AG04449 (cell line): ENCODE measurements at regions of chr5 and their contacts with region 1.

Region 1: GRCh38 chr5:42908509-42909488 is 97.1 kb upstream of the SELENOP start:
- DNase-seq: peak; percentile 16
- H3K4me3 ChIP-seq: peak overlapping the region; percentile 62
- CTCF ChIP-seq: peak; percentile 84

Region 2: GRCh38 chr5:42390115-42390514 is 518.7 kb before region 1 on chr5:
- CTCF ChIA-PET with region 1: no interaction called
- POLR2A ChIA-PET with region 1: no interaction called
- DNase-seq: no peak
- H3K4me3 ChIP-seq: no peak overlapping the region
- CTCF ChIP-seq: no peak

Region 3: DNA sequence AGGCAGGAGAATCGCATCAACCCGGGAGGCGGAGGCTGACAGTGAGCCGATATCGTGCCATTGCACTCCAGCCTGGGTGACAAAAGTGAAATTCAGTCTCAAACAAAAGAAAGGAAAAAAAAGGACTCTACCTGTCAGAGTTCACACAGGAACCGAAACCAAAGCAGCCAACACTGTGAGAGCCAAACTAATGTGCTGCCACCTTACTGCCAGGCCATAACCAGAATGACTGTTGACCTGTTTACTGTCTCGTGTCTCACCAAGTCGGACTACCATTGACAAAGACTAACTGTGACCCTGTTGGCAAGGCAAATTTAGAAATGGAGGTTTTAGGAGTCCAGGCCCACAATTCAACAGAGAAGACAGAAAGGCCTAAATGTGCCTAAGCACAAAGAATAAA is 18.9 kb after region 1 on chr5:
- CTCF ChIA-PET with region 1: interaction called, 10 read pairs
- POLR2A ChIA-PET with region 1: no interaction called
- DNase-seq: no peak
- H3K4me3 ChIP-seq: no peak overlapping the region
- CTCF ChIP-seq: no peak

Region 4: GRCh38 chr5:42994246-42995151 is 85.7 kb after region 1 on chr5:
- CTCF ChIA-PET with region 1: interaction called, 84 read pairs
- POLR2A ChIA-PET with region 1: no interaction called
- DNase-seq: no peak
- H3K4me3 ChIP-seq: peak overlapping the region; percentile 69
- CTCF ChIP-seq: peak; percentile 83

Region 5: GRCh38 chr5:43019614-43020293 is 111.0 kb after region 1 on chr5:
- CTCF ChIA-PET with region 1: interaction called, 82 read pairs
- POLR2A ChIA-PET with region 1: interaction called, 4 read pairs
- DNase-seq: no peak
- H3K4me3 ChIP-seq: peak overlapping the region; percentile 74
- CTCF ChIP-seq: peak; percentile 70

Region 6: DNA sequence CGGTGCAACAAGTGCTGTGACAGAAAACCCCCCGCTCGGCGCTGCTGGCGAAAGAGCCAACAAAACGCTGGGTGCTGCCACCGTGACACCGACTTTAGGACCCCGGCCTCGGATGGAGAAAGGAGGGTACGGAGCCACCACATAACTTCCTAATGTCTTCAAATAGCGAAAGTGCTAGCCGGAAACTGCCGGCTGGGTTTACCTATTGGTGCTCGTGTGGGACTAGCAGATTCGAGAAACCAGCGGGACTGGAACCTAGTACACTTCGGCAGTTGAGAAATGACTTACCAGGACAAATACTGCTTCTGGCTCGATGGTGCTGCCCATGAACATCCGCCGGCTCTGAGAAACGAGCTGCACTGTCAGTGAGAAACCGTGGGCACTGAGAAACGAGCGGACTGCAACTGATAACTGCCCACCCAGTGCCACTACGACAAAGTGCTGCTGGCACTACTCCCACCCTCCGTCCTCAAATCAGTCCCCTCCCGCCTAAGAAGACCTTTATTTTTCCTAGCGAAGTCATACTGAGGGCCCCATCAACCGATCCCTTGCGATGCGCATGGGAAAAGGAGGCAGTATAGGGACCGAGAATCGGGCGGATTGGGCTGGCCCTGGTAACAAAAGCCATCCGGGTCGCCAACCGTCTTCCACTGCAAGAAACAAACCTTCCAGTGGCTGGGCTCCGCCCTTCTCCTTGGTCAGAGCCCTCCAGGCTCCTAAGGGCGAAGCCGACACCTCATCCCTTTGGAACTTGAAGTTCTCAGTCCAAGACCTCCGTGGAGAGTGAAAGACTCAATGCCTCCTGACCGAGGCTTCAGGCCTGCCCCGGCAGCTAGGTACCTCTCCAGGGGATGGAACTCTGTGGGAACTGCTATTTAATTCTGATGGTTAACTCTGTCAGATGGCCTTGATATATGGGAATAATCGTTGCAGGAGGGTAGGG is 158.3 kb after region 1 on chr5:
- CTCF ChIA-PET with region 1: interaction called, 20 read pairs
- POLR2A ChIA-PET with region 1: no interaction called
- DNase-seq: no peak
- H3K4me3 ChIP-seq: peak overlapping the region; percentile 86
- CTCF ChIP-seq: no peak

Region 7: DNA sequence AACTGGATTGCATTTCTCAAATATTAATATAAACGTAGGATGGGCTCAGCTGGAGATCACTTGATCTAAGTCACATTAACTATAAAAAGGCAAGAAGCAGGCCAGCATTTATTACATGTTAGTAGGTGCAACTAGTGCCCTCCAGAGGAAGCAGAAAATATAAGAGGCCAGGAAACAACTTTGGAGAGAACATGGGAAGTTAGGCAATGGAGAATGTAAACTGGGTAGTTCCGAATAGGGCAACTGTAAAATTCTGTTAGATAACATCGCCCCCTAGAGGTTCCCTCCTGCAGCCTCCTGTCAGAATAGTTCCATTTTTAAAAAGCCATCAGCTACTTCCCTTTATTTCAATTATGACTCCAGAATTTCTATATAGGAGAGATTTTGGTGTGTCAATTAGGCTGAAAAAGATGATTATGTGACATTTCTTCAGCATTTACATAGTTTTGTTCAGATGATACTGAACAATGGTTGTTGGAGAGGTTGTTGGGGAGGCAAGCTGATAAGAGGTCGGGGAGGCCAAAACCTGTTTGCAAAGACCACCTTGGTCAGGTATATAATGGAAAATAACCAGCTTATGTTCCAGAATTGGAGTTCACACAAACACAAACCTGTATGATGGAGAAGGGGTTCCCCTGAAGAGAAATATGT is 481.0 kb after region 1 on chr5:
- CTCF ChIA-PET with region 1: interaction called, 32 read pairs
- POLR2A ChIA-PET with region 1: no interaction called
- DNase-seq: peak; percentile 71
- H3K4me3 ChIP-seq: no peak overlapping the region
- CTCF ChIP-seq: peak; percentile 64